GM10248 (cell line): ENCODE measurements at regions of chr17 and their contacts with region 1.

Region 1: GRCh38 chr17:72539981-72540897 is 419.4 kb downstream of the SOX9 start:
- DNase-seq: peak; percentile 89
- CTCF ChIP-seq: peak; percentile 97

Region 2: DNA sequence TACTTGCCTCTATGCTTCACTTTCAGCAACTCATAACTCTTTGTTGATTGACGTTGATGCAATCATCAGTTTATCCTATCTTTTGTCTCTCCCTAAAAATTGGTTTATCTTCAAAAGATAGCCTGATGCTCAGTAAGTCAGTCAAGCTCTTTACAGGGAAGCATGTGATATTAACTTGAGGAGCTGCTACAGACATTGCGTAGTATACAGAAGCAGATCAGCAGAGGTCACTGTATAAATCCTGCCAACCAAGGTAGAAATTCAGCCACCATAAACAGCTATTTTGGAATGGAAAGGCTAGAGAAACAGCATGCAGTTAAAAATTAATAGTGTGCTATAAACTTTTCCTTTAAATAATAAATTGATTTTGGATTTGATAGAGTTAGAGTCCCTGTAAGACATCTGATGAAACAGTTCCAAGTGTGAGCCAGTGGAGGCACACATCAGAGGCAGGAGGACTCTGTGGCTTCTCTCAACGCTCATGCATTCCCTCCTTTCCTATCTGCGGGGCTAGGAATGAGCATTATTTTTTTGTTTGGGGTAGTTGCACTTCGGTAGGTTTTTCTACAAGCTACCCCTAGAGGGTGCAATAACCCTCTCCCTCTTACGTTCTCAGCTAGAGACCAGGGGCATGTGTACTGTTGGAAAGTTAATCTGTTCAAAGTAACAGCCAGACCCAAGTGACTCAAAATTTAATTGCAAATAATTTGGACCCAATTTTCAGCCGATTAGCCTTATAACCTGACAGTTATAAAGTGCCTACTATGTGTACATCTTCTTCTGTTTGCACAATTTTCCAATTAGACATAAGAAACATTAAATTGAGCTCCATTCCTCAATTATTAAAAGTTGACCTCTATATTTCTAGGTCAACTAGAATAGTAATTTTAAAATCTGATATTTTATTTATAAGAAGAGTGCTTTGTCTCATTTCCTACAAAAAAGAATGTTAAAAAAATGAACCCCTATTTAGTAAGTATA is 1067.1 kb before region 1 on chr17:
- CTCF ChIA-PET with region 1: interaction called, 18 read pairs
- POLR2A ChIA-PET with region 1: no interaction called
- DNase-seq: peak; percentile 22
- CTCF ChIP-seq: peak; percentile 41

Region 3: GRCh38 chr17:72120642-72121163 is 419.5 kb before region 1 on chr17 and contains the start of gene SOX9:
- CTCF ChIA-PET with region 1: interaction called, 13 read pairs
- POLR2A ChIA-PET with region 1: no interaction called
- DNase-seq: peak; percentile 90
- CTCF ChIP-seq: no peak

Region 4: GRCh38 chr17:72520665-72521303 is 19.5 kb before region 1 on chr17:
- CTCF ChIA-PET with region 1: interaction called, 11 read pairs
- POLR2A ChIA-PET with region 1: no interaction called
- DNase-seq: peak; percentile 38
- CTCF ChIP-seq: no peak

Region 5: DNA sequence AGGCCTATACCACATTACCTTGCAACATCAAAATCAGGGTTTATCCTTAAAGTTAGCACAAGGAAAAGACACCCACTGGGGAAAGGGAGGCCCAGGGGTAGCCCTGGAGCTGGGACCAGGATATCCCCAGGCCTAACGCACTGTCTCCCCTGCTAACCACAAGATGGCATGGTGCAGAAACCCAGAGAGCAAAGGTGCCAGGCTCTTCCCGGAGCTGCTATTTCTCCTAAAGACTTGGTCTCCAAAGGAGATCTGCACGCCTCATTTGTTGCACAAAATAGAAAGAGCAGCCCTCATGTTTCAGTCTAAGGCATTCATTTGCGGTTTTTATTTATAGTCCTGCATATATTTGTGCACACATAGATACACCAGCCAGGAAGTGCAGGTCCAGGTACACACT is 10.9 kb before region 1 on chr17:
- CTCF ChIA-PET with region 1: interaction called, 22 read pairs
- POLR2A ChIA-PET with region 1: no interaction called
- DNase-seq: no peak
- CTCF ChIP-seq: no peak

Region 6: GRCh38 chr17:72683506-72684404 is 143.5 kb after region 1 on chr17:
- CTCF ChIA-PET with region 1: no interaction called
- POLR2A ChIA-PET with region 1: no interaction called
- DNase-seq: no peak
- CTCF ChIP-seq: no peak